ENCODE measurements at regions of chrX and their contacts with region 1.

Region 1: DNA sequence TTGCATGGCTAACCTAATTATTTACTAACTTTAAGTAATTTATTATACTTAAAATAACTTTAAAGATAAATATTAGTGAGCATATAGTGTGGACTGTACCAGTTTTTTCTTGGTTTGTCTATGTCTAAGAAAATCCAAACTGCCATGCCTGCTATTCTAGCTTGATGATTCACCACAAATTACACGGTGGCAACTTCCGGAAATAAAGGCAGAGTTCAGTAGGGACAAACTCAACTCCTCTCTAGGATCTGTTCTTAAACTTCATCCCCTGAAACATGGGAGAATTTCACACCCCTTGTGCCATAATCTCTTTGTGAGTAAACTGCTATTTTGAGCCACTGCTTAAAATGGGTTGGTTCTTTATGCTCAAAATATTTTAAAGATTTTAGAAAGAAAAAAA is 213.6 kb upstream of the NRK start:
- DNase-seq: peak; percentile 48
- ATAC-seq: no peak
- H3K4me3 ChIP-seq: no peak overlapping the region
- H3K27ac ChIP-seq: no peak overlapping the region
- H3K4me1 ChIP-seq: peaks cover 23% of the 10 kb centered on the region
- H3K27me3 ChIP-seq: no peaks in the 10 kb centered on the region
- CTCF ChIP-seq: no peak

Region 2: GRCh38 chrX:105636667-105637066 is 27.9 kb after region 1 on chrX:
- CTCF ChIA-PET with region 1: no interaction called
- POLR2A ChIA-PET with region 1: no interaction called
- intact Hi-C with region 1: loop called (anchors 1 kb)
- DNase-seq: peak; percentile 50
- ATAC-seq: peak; percentile 63
- H3K4me3 ChIP-seq: no peak overlapping the region
- H3K27ac ChIP-seq: peak overlapping the region; percentile 75
- H3K4me1 ChIP-seq: peaks cover 24% of the 10 kb centered on the region
- H3K27me3 ChIP-seq: no peaks in the 10 kb centered on the region
- CTCF ChIP-seq: no peak

Region 3: DNA sequence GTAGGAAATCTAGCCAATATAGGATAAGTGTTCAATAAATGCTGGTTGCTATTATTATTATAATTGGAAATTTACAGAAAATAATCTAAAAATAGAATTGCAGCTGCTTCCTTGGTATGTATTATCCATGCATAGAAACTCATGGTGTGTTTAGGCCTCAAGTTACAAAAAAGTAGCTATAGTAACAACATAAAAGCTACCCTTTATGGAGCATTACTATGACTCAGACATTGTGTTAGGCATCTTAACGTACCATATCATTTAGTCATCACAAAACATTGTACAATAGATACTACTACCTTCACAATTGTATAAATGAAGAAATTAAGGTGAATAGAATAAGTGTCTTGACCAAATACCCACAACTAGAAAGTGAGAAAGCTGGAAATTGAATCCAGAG is 86.7 kb after region 1 on chrX:
- CTCF ChIA-PET with region 1: interaction called, 6 read pairs
- POLR2A ChIA-PET with region 1: no interaction called
- intact Hi-C with region 1: loop called (anchors 1 kb)
- DNase-seq: peak; percentile 84
- ATAC-seq: peak; percentile 96
- H3K4me3 ChIP-seq: no peak overlapping the region
- H3K27ac ChIP-seq: peak overlapping the region; percentile 75
- H3K4me1 ChIP-seq: peaks cover 27% of the 10 kb centered on the region
- H3K27me3 ChIP-seq: no peaks in the 10 kb centered on the region
- CTCF ChIP-seq: no peak

Measured in PC-3 (cell line).